ENCODE measurements at regions of chr1 and their contacts with region 1.

Region 1: DNA sequence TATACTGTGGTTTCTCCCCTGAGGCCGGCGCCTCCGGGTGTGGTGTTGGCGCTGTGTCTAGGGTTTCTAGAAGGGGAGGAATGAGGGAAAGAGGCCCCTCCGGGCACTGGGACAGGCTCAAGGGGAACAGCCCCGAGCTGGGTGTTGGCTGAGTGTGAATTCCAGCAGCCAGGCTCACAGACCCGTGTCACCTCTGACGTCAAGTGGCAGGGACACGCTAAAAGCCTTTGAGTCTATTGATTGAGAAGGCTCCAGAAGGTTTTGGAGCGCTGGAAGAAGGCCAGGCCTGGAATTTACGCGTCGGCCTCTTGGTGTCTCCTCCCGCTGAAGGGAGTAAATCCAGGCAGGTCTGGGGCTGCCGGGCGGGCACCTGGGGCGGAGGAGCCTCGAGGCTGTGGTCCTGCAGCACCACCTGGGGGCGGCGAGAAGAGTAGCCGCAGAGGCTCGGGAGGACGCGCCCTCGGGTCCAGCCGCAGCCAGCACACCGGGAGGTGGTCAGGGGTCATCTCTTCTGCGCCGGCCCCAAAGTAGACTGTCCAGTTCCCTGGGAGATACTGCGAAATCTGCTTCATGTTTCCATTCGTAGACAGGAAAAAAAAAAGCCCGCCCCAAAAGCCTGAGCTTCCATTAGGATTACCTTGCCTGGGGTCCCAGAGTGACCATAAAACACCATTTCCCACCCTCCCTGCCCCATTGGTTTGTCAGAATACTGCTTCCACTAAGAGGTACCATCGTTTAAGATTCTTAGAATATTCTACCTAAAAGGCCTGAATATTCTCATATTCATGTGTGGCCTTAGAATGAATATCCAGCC is 61.7 kb downstream of the TLR5 start:
- DNase-seq: peak; percentile 21
- H3K4me3 ChIP-seq: peak overlapping the region; percentile 34
- H3K27me3 ChIP-seq: peaks cover 13% of the 10 kb centered on the region
- CTCF ChIP-seq: peak; percentile 96

Region 2: GRCh38 chr1:222732216-222733159 is 348.9 kb before region 1 on chr1:
- CTCF ChIA-PET with region 1: interaction called, 12 read pairs
- POLR2A ChIA-PET with region 1: no interaction called
- DNase-seq: no peak
- H3K4me3 ChIP-seq: no peak overlapping the region
- H3K27me3 ChIP-seq: no peaks in the 10 kb centered on the region
- CTCF ChIP-seq: no peak

Region 3: GRCh38 chr1:222739465-222739864 is 341.9 kb before region 1 on chr1:
- CTCF ChIA-PET with region 1: interaction called, 12 read pairs
- POLR2A ChIA-PET with region 1: no interaction called
- DNase-seq: no peak
- H3K4me3 ChIP-seq: no peak overlapping the region
- H3K27me3 ChIP-seq: no peaks in the 10 kb centered on the region
- CTCF ChIP-seq: no peak

Region 4: GRCh38 chr1:222792744-222793143 is 288.6 kb before region 1 on chr1:
- CTCF ChIA-PET with region 1: interaction called, 273 read pairs
- POLR2A ChIA-PET with region 1: no interaction called
- DNase-seq: no peak
- H3K4me3 ChIP-seq: no peak overlapping the region
- H3K27me3 ChIP-seq: peaks cover 3% of the 10 kb centered on the region; the same call in 1 of the 2 replicates
- CTCF ChIP-seq: peak; percentile 57

Region 5: GRCh38 chr1:222956601-222957000 is 124.8 kb before region 1 on chr1:
- CTCF ChIA-PET with region 1: no interaction called
- POLR2A ChIA-PET with region 1: no interaction called
- DNase-seq: no peak
- H3K4me3 ChIP-seq: no peak overlapping the region
- H3K27me3 ChIP-seq: no peaks in the 10 kb centered on the region
- CTCF ChIP-seq: no peak